Activated CD4-positive, alpha-beta T cell treated with anti-CD3 and anti-CD28 coated beads, Interleukin-2, amount 10 ng/mL, durations not matched to agents 24 days and 14 days (primary cell): ENCODE measurements at regions of chr16 and their contacts with region 1.

Region 1: DNA sequence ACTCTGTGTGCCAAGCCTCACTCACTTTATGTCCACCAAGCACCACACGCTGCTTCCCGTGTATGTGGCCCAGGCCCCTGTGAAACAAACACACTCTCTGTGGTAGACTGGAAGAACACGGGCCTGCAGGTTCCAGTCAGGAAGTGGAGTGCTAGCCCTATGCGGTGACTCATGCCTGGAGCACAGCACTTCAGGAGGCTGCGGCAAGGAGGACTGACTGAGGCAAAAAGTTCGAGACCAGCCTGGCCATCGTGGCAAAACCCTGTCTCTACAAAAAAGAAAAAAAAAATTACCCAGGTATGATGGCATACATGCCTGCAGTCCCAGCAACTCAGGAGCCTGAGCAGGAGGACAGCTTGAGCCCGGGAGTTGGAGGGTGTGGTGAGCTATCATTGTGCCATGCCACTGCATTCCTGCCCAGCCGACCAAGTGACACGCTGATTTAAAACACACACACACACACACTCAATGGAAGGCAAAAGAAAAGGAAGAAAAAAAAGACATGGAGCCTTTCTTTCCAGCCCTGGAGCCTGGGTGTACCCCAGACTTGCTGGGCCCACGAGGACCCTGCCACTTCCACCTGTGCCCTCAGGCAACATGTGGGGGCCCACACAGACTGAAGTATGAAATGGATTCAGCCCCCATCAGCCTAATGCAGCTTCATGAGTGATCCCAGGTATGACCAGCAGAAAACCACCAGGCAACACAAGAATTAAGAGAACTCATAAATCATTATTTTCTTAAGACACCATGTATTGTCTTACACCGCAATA is 126.6 kb downstream of the ANKRD11 start:
- DNase-seq: peak; percentile 82
- H3K4me3 Mint-ChIP-seq: peak overlapping the region; percentile 63
- H3K27ac Mint-ChIP-seq: peak overlapping the region; percentile 86
- H3K4me1 Mint-ChIP-seq: peaks cover 70% of the 10 kb centered on the region
- H3K27me3 Mint-ChIP-seq: no peaks in the 10 kb centered on the region

Region 2: DNA sequence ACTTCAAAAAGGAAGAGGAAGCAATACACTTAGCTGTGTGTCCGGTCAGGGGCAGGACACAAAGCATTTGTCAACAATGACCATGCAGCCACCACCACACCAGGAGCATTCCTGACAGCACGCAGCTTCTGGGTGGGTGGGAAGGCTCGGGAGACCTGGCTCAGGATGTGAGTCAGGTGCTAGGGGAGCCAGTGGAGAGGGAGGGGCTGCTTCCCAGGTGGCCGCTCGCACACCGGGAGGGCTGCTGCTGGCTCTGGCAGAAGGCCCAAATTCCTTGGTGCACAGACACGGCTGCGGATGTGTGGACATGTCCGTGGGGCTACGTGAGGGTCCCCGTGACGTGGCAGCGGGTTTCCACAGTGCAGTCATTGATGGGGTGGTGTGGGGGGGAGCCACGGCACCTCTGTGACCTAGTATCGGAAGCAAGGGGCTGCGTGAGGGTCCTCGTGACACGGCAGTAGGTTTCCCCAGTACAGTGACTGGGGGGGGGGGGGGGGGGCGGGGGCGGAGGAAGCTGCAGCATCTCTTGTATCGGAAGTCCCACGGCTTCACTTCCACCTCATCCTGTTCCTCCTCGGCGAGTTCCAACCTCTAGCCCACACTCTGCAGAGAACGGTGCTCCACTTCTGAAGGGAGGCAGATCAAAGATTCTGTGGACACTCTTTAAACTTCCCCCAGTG is 33.5 kb before region 1 on chr16:
- intact Hi-C with region 1: loop called (anchors 2 kb)
- DNase-seq: peak; percentile 80
- H3K4me3 Mint-ChIP-seq: peak overlapping the region; percentile 17
- H3K27ac Mint-ChIP-seq: peak overlapping the region; percentile 58
- H3K4me1 Mint-ChIP-seq: peaks cover 67% of the 10 kb centered on the region
- H3K27me3 Mint-ChIP-seq: no peaks in the 10 kb centered on the region

Region 3: DNA sequence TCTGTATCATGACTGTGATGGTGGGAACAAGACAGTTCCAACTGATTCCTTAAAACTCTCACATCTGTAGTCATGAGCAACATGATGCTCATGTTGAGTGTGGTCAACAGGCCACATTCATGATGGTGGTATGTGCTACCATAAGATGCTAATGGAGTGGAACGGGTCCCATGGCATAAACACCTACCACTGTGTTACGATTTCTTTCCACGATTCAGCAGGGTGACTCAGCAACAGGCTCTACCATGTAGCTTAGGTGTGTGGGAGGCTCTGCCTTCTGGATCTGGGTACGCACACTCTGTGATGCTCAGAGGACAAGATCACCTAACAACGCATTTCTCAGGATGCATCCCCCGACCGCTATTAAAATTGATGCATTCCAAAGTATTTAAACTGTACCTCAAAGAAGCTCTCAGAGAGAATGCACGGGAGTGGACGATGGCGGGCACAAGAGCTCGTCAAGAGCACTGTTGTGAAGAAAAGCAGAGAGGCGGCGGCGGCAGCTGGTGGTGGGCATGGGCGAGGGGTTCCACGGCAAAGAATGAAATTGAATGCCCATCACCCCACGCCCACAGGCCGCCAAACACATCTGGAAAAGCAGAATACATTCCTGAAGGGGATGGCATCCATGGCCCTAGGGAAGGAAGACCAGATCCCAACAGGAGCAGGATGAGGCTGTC is 13.0 kb before region 1 on chr16:
- intact Hi-C with region 1: loop called (anchors 1 kb)
- DNase-seq: peak; percentile 67
- H3K4me3 Mint-ChIP-seq: peak overlapping the region; percentile 71
- H3K27ac Mint-ChIP-seq: peak overlapping the region; percentile 84
- H3K4me1 Mint-ChIP-seq: peaks cover 71% of the 10 kb centered on the region
- H3K27me3 Mint-ChIP-seq: no peaks in the 10 kb centered on the region

Region 4: DNA sequence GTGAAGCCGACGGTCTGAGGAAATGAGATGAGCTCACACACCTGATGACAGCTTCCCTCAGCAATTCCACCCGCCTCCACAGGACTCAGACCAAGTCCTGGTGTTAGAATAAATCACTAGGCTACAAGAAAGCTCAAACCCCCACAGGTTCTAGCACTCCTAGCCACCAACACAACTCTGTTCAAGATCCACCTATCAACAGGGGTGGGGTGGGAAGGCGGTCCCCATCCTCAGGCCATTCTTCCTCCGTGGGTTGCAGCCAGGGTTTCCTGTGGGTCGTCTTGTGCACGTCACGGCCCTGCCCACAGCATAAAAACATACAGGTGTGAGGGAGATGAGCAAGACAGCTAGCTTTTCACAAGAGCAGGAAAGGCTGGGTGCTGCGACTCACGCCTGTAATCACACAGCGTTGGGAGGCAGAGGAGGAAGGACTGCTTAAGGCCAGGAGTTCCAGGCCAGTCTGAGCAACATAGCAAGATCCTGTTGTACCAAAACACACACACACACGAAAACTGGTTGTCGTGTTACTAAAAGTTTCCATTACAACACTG is 45.4 kb after region 1 on chr16:
- intact Hi-C with region 1: loop called (anchors 5 kb)
- DNase-seq: peak; percentile 89
- H3K4me3 Mint-ChIP-seq: peak overlapping the region; percentile 58
- H3K27ac Mint-ChIP-seq: peak overlapping the region; percentile 84
- H3K4me1 Mint-ChIP-seq: peaks cover 77% of the 10 kb centered on the region
- H3K27me3 Mint-ChIP-seq: no peaks in the 10 kb centered on the region

Region 5: GRCh38 chr16:89490387-89491237 is 126.8 kb after region 1 on chr16 and contains the start of gene ANKRD11:
- intact Hi-C with region 1: loop called (anchors 1 kb)
- DNase-seq: peak; percentile 100
- H3K4me3 Mint-ChIP-seq: peak within 1 kb of the TSS; percentile 94
- H3K27ac Mint-ChIP-seq: peak within 1 kb of the TSS; percentile 96
- H3K4me1 Mint-ChIP-seq: peaks cover 41% of the 10 kb centered on the region
- H3K27me3 Mint-ChIP-seq: no peaks in the 10 kb centered on the region
- total RNA-seq, gene ANKRD11: 152 TPM in 2 replicates